Gastrocnemius medialis (tissue), 4 donors: ENCODE measurements at regions of chr19 and their contacts with region 1.

Region 1: DNA sequence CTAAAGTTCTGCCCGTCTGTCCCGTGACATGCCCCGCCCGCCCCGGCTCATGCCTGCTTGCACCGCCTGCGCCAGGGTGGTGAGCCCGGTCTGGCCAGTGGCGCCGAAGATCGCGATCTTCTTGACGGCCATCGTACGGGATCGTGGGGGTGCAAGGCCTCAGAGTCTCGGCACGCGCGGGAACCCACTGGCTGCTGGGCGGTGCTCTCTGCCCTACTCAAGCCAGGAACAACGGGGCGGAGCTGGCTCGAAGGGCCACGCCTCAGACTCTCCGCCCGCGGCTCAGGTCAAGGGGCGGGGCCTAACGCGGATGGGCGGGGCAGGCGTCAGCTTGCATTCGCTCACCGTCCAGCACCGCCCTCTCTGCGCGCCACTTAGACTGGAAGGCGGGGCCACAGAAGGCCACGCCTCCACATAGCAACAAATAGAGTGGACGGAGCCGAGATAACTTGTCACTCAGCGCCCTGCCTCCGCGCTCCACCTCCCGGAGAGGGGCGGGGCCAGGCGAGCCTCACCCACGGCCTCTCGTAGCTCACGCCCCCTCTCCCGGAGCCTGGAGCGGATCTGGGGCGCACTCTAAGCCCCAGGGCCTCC is at the start of gene BLVRB:
- DNase-seq: peak; percentile 99 to 100
- ATAC-seq: peak; percentile 77 to 86
- H3K4me3 ChIP-seq: peak within 1 kb of the TSS; percentile 81 to 100 (median 88)
- H3K27ac ChIP-seq: peak within 1 kb of the TSS; percentile 97 to 100 (median 98)
- H3K4me1 ChIP-seq: peaks cover 5 to 22% of the 10 kb centered on the region in 2 donors
- H3K27me3 ChIP-seq: no peaks in the 10 kb centered on the region
- CTCF ChIP-seq: no peak
- POLR2A ChIP-seq: peak; percentile 93 to 95
- total RNA-seq, gene BLVRB: 254 to 679 (median 280) TPM

Region 2: GRCh38 chr19:39833464-39834286 is 632.0 kb before region 1 on chr19 and contains the start of gene DYRK1B:
- in situ Hi-C with region 1: no loop called
- intact Hi-C with region 1: loop called (anchors 10 kb)
- DNase-seq: peak; percentile 99
- ATAC-seq: peak; percentile 87 to 91
- H3K4me3 ChIP-seq: peak within 1 kb of the TSS; percentile 70 to 97 (median 80)
- H3K27ac ChIP-seq: peak within 1 kb of the TSS; percentile 90 to 99 (median 94)
- H3K4me1 ChIP-seq: peaks cover 19 to 33% of the 10 kb centered on the region in 2 donors
- H3K27me3 ChIP-seq: no peaks in the 10 kb centered on the region
- CTCF ChIP-seq: no peak
- POLR2A ChIP-seq: peak in 1 of 2 donors; percentile 76
- total RNA-seq, gene DYRK1B: 39.6 to 68.7 (median 61.8) TPM

Region 3: DNA sequence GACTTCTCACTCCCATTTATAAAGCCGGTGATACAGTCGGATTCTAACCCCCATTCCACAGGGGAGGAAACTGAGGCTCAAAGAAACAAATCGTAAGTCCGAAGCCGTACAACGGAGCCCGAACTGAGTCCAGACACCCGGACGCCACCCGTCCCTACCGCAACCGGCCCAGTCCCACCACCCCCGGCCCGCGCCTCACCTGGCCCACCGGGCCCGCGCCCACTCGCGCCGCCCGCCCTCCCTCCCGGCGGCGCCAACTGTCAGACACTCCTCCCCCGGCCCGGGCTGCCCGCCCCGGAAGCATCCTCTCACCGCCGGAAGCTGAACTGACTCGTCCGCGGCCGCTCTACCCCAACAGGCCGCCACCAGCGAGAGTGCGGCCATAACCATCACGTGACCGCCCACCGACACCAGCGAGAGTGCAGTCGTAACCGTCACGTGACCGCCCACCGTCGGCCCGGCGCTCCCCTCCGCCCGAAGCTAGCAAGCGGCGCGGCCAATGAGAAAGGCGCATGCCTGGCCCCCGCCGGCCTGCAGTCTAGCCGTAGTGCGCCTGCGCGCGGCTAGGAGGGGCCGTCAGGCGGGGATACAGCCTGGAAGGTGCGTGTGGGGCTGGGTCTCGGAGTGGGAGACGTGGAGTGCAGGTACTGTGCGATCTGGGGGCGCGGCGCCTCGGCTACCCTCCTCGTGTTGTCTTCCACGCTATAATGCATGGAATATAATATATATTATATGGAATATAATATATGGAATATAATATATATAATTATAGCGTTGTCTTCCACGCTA is 117.3 kb before region 1 on chr19 and contains the starts of genes C19orf47 and PLD3:
- in situ Hi-C with region 1: no loop called
- intact Hi-C with region 1: loop called (anchors 5 kb)
- DNase-seq: peak; percentile 100
- ATAC-seq: peak; percentile 95 to 97
- H3K4me3 ChIP-seq: peak within 1 kb of the TSS; percentile 61 to 87 (median 82)
- H3K27ac ChIP-seq: peak within 1 kb of the TSS; percentile 86 to 93 (median 92)
- H3K4me1 ChIP-seq: peaks cover 9 to 22% of the 10 kb centered on the region in 2 donors
- H3K27me3 ChIP-seq: no peaks in the 10 kb centered on the region
- CTCF ChIP-seq: peak in 2 of 5 experiments; percentile 72 to 78
- POLR2A ChIP-seq: peak; percentile 87 to 95
- total RNA-seq, gene C19orf47: 178 to 287 (median 219) TPM
- total RNA-seq, gene PLD3: 136 to 198 (median 190) TPM

Region 4: DNA sequence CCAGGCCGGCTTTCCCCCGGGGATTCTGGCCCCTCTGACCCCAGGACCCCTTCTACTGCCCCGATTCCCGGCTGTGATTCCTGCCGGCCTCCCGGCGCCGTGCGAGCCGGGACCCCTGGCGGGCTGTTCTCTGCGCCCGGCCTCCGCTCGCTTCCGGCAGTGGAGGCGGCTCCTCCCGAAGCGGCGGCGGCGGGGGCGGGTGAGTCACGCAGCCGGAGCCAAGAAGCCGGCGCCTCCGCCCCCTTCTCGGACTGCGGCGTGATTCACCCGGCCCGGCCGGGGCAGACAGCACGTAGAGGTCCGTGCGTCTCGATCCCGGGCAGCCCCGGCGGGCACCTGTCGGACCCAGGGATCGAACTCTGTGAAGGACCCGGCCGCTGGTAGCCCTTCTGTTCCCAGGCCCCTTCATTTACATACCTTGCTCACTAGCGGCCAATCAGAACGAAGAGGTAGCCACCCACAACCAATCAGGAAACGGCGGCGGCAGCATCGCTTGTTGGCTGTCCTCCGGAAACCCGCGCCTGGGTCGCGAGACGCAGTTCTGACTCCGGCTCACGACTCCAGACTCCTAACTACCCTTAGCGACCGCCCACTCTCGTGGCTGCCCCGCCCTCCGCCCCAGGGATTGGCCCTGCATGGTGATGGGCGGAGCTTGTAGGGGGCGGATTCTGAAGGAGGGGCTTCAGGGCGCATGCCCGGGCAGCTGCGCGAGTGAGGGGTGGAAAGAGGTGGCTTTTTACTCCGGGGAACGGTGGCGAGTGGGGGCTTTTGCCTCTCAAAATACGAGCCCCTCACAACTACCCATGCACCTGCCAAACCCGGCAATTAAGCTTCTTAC is 40.0 kb before region 1 on chr19 and contains the start of gene SERTAD1:
- in situ Hi-C with region 1: no loop called
- intact Hi-C with region 1: loop called (anchors 1 kb)
- DNase-seq: peak; percentile 99 to 100
- ATAC-seq: peak; percentile 82 to 87
- H3K4me3 ChIP-seq: peak within 1 kb of the TSS; percentile 78 to 94 (median 84)
- H3K27ac ChIP-seq: peak within 1 kb of the TSS; percentile 98 to 100 (median 99)
- H3K4me1 ChIP-seq: peaks cover 32 to 34% of the 10 kb centered on the region in 2 donors
- H3K27me3 ChIP-seq: no peaks in the 10 kb centered on the region
- CTCF ChIP-seq: peak in 4 of 5 experiments; percentile 66 to 97 (median 90)
- POLR2A ChIP-seq: peak; percentile 100
- total RNA-seq, gene SERTAD1: 15.3 to 18.3 (median 16.0) TPM

Region 5: GRCh38 chr19:40609561-40610395 is 144.1 kb after region 1 on chr19:
- in situ Hi-C with region 1: no loop called
- intact Hi-C with region 1: loop called (anchors 5 kb)
- DNase-seq: peak; percentile 80 to 85
- ATAC-seq: peak; percentile 66 to 75
- H3K4me3 ChIP-seq: peak overlapping the region; percentile 42 to 68 (median 50)
- H3K27ac ChIP-seq: peak overlapping the region; percentile 60 to 84 (median 81)
- H3K4me1 ChIP-seq: peaks cover 12% of the 10 kb centered on the region in 2 donors
- H3K27me3 ChIP-seq: no peaks in the 10 kb centered on the region
- CTCF ChIP-seq: no peak
- POLR2A ChIP-seq: peak in 1 of 2 donors; percentile 39